Activated B cell treated with CpG ODN at 0.5 μM for 24 hours (primary cell): ENCODE measurements at regions of chr12 and their contacts with region 1.

Region 1: DNA sequence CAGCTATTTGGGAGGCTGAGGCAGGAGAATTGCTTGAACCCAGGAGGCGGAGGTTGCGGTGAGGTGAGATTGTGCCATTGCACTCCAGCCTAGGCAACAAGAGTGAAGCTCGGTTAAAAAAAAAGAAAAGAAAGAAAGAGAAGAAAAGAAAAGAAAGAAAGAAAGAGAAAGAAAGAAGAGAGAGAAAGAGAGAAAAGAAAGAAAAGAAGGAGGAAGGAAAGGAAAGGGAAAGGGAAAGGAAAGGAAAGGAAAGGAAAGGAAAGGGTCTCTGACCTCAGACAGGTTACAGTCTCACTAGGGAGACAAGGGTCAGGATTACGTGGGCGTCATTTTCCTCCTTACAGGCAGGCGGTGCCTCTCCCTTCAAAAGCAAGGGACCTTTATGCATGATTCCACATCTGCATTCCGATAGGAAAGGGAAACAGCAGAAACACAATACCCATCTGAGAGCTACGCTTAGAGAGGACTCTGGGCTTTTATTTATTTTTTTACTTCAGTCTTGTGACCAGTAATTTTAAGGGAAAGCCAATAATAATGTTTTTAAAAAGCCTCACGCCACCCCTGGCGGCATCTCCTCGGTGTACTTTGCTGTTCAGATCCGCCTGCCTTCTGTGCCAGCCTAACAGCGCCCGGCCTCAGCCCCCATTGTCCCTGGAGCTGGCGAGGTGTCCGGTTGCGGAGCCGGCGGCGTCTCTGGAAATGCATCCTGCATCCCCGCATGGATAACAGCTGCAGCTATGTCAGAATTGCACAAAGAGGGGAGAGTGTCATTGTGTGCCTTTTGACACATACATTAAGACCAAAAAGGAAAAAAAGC is 945 bp upstream of the HIP1R start:
- DNase-seq: peak; percentile 14
- ATAC-seq: no peak
- H3K4me3 Mint-ChIP-seq: peak overlapping the region; percentile 92
- H3K27ac Mint-ChIP-seq: peak overlapping the region; percentile 86
- H3K4me1 Mint-ChIP-seq: peaks cover 38% of the 10 kb centered on the region
- H3K27me3 Mint-ChIP-seq: no peaks in the 10 kb centered on the region
- CTCF ChIP-seq: no peak

Region 2: GRCh38 chr12:122813310-122813713 is 21.0 kb before region 1 on chr12:
- CTCF ChIA-PET with region 1: interaction called, 7 read pairs
- POLR2A ChIA-PET with region 1: interaction called, 55 read pairs
- intact Hi-C with region 1: loop called (anchors 1 kb)
- DNase-seq: peak; percentile 54
- ATAC-seq: peak; percentile 95
- H3K4me3 Mint-ChIP-seq: peak overlapping the region; percentile 86
- H3K27ac Mint-ChIP-seq: peak overlapping the region; percentile 98
- H3K4me1 Mint-ChIP-seq: peaks cover 53% of the 10 kb centered on the region
- H3K27me3 Mint-ChIP-seq: no peaks in the 10 kb centered on the region
- CTCF ChIP-seq: no peak

Region 3: DNA sequence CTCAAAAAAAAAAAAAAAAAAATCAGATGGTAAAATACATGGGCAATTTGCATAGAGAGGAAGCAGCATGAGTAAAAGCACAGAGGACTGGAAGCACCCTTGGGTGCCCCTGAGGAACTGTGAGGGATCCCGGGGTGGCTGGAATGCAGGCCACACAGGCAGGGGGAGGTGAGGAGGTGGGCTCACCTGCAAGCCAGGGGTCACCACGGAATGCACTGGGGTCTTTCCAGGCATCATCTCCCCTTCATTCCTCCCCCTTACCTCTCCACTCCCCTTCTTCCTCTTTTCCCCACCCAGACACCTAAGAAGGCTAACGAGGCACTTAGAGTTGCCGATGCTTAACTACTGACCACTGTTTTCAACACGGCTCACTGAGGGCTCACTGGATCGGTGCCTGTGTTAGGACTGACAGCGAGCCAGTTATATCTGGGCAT is 13.5 kb before region 1 on chr12:
- CTCF ChIA-PET with region 1: interaction called, 4 read pairs
- POLR2A ChIA-PET with region 1: interaction called, 55 read pairs
- intact Hi-C with region 1: loop called (anchors 1 kb)
- DNase-seq: peak; percentile 52
- ATAC-seq: peak; percentile 85
- H3K4me3 Mint-ChIP-seq: peak overlapping the region; percentile 60
- H3K27ac Mint-ChIP-seq: peak overlapping the region; percentile 95
- H3K4me1 Mint-ChIP-seq: peaks cover 57% of the 10 kb centered on the region
- H3K27me3 Mint-ChIP-seq: no peaks in the 10 kb centered on the region
- CTCF ChIP-seq: no peak